Activated CD4-positive, alpha-beta T cell treated with anti-CD3 and anti-CD28 coated beads for 36 hours (primary cell): ENCODE measurements at regions of chr11 and their contacts with region 1.

Region 1: GRCh38 chr11:72483412-72484186 is 49.3 kb upstream of the CLPB start:
- DNase-seq: no peak
- ATAC-seq: peak; percentile 42
- H3K4me3 Mint-ChIP-seq: no peak overlapping the region
- H3K27ac Mint-ChIP-seq: no peak overlapping the region
- H3K4me1 Mint-ChIP-seq: peaks cover 5% of the 10 kb centered on the region
- H3K27me3 Mint-ChIP-seq: peaks cover 2% of the 10 kb centered on the region

Region 2: DNA sequence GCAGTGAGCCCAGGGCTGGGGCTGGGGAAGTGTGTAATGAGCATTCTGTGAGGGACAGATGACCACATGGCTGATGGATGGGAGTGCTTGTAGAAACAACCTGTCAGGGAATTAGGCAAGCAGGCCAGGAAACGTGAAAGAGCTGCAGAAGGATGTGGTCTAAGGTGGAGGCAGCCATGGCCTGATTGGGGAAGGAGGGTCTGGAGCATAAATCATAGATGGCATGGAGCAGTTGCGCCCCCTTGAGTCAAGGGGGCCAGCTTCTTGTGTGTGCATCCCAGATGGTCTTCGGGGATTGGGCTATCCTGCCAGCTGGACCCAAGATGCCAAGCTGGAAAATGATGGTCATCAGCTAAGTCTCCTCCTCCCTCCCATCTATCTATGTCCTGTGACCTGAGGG is 70.1 kb after region 1 on chr11:
- CTCF ChIA-PET with region 1: interaction called, 3 read pairs
- POLR2A ChIA-PET with region 1: no interaction called
- intact Hi-C with region 1: loop called (anchors 1 to 2 kb)
- DNase-seq: peak; percentile 54
- ATAC-seq: peak; percentile 44
- H3K4me3 Mint-ChIP-seq: no peak overlapping the region
- H3K27ac Mint-ChIP-seq: no peak overlapping the region
- H3K4me1 Mint-ChIP-seq: no peaks in the 10 kb centered on the region
- H3K27me3 Mint-ChIP-seq: peaks cover 5% of the 10 kb centered on the region

Region 3: GRCh38 chr11:72573072-72573854 is 89.7 kb after region 1 on chr11:
- CTCF ChIA-PET with region 1: interaction called, 3 read pairs
- POLR2A ChIA-PET with region 1: no interaction called
- intact Hi-C with region 1: loop called (anchors 1 kb)
- DNase-seq: peak; percentile 56
- ATAC-seq: peak; percentile 70
- H3K4me3 Mint-ChIP-seq: no peak overlapping the region
- H3K27ac Mint-ChIP-seq: no peak overlapping the region
- H3K4me1 Mint-ChIP-seq: peaks cover 4% of the 10 kb centered on the region
- H3K27me3 Mint-ChIP-seq: peaks cover 12% of the 10 kb centered on the region

Region 4: DNA sequence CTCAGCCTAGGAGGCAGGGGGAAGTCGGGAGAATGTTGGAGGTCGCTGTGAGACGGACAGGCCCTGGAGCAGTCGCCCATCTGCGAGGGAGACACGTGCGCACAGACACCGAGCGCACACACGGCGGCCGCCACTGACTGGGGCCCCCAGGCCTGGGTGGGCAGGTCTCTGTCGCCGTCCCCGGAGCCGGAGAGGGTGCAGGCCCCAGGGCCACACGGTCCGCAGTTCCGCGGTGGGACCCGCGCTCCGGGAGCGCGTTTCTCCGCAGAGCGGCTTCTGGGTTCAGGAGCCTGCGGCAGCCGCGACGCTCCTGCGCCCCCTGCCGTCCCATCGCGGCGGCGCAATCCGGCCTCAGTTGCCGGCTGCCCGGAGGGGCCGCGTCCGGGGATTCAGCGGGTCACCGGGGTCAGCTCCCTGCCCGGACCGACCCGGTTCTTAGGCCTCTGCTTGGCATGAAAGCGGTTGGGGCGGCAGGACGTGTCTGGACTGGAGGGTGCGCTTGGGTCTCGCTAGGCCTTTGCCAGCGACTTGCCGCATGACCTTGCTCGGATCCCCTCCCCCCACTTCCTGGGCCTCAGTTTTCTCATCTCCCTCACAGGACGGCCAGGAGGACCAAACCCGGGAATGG is 159.4 kb after region 1 on chr11:
- CTCF ChIA-PET with region 1: interaction called, 3 read pairs
- POLR2A ChIA-PET with region 1: no interaction called
- intact Hi-C with region 1: loop called (anchors 1 kb)
- DNase-seq: peak; percentile 79
- ATAC-seq: peak; percentile 88
- H3K4me3 Mint-ChIP-seq: no peak overlapping the region
- H3K27ac Mint-ChIP-seq: no peak overlapping the region
- H3K4me1 Mint-ChIP-seq: no peaks in the 10 kb centered on the region
- H3K27me3 Mint-ChIP-seq: peaks cover 4% of the 10 kb centered on the region

Region 5: DNA sequence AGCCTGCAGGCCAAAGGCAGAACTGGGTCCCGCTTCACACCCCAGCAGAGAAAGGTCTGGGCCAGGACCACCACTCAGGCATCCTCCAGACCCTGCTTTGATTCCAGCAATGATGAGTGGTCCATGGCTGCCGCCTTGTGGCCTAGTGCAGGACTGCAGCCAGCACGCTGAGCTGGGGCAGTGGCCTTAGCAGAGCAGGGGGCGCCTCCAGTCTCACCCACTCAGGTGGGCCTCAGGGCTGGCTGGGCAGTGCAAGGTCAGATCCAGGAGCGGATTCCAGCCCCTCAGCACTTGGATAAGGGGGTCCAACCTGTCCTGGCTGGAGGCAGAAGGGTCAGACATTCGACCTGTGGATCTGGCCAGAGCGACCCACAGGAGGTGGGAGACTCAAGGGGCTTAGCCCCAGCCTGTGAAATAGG is 200.2 kb after region 1 on chr11:
- CTCF ChIA-PET with region 1: no interaction called
- POLR2A ChIA-PET with region 1: no interaction called
- intact Hi-C with region 1: loop called in 1 of 2 experiments (anchors 5 kb)
- DNase-seq: peak; percentile 83
- ATAC-seq: peak; percentile 60
- H3K4me3 Mint-ChIP-seq: no peak overlapping the region
- H3K27ac Mint-ChIP-seq: no peak overlapping the region
- H3K4me1 Mint-ChIP-seq: peaks cover 15% of the 10 kb centered on the region
- H3K27me3 Mint-ChIP-seq: no peaks in the 10 kb centered on the region